Activated CD4-positive, alpha-beta T cell treated with anti-CD3 and anti-CD28 coated beads for 36 hours (primary cell): ENCODE measurements at regions of chr5 and their contacts with region 1.

Region 1: DNA sequence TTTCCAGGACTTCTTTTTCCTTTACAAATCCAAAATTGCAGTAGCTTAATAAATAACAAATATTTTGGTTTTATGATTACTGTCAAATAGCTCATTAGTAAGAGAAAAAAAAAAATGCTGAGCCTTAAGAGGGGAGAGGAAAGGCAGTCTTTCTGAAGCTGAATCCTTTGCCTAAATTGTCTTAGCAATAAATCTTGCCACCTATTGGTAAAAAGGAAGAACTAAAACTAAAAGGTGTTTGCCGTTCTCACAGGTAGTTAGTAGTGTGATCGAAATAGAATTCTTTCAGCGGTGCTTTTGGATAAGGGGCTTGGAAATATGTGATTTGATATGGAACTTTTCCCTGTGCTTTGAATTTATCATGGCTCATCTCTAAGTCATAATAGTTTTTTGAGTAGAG is 31.2 kb downstream of the PIK3R1 start:
- DNase-seq: no peak
- ATAC-seq: no peak
- H3K4me3 Mint-ChIP-seq: no peak overlapping the region
- H3K27ac Mint-ChIP-seq: no peak overlapping the region
- H3K4me1 Mint-ChIP-seq: peaks cover 71% of the 10 kb centered on the region
- H3K27me3 Mint-ChIP-seq: no peaks in the 10 kb centered on the region

Region 2: DNA sequence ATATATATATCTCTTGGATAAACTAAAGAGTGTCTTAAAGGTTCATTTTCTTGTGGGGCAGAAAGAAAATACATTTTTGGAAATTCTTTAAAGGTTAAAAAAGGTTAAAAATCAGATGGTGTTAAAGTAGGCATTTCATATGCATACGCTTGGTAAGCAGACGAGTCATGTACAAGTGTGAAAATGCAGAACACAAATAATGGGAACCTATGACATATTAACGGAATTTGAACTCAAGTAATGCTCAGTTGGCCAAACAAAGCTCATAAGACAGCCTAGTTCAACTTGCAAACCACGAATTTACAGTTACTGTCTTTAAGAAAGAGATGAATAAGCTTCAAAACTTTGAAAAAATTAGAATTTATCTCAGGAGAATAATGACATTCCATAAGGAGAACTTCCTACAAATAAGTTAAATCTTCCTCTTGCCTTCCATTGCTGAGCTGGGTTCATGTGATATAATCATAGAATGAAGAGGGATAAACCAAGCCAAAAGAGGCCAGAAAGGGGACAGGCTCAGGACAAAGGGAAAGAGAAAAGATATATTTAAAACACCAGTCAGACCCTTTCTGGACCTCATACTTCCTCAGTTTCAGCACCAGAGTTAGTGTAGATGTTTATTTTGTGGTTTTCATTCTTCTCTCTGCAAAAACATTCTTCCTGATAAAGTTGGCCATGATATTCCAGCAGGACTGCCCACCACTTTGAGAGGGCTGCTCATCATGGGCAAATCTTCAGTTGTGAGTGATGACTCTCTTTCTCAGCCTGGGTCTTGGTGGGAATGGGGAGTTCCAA is 793.5 kb before region 1 on chr5:
- CTCF ChIA-PET with region 1: no interaction called
- POLR2A ChIA-PET with region 1: no interaction called
- intact Hi-C with region 1: no loop called
- DNase-seq: no peak
- ATAC-seq: no peak
- H3K4me3 Mint-ChIP-seq: no peak overlapping the region
- H3K27ac Mint-ChIP-seq: no peak overlapping the region
- H3K4me1 Mint-ChIP-seq: peaks cover 14% of the 10 kb centered on the region
- H3K27me3 Mint-ChIP-seq: no peaks in the 10 kb centered on the region

Region 3: DNA sequence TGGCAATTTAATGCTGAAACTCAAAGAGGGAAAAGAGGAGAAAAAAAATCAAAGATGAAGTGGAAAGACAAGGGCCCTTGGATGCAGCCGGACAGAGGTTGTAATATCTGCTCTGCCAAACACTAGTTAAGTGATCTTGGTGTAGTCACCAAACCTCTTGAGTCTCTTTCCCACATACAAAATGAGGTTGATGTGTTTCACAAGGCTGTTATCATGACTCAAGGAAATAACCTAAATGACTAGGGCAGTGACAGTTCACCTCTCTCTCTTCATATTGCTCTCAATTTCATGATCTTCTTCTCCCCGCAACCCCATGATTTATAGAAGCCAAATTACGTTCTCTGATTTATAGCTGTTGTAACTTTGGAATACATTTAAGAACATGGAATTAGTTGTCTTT is 13.7 kb after region 1 on chr5:
- CTCF ChIA-PET with region 1: interaction called, 13 read pairs
- POLR2A ChIA-PET with region 1: no interaction called
- intact Hi-C with region 1: no loop called
- DNase-seq: no peak
- ATAC-seq: peak; percentile 80
- H3K4me3 Mint-ChIP-seq: no peak overlapping the region
- H3K27ac Mint-ChIP-seq: peak overlapping the region; percentile 77
- H3K4me1 Mint-ChIP-seq: peaks cover 84% of the 10 kb centered on the region
- H3K27me3 Mint-ChIP-seq: no peaks in the 10 kb centered on the region

Region 4: GRCh38 chr5:69317391-69317790 is 1070.6 kb after region 1 on chr5:
- CTCF ChIA-PET with region 1: no interaction called
- POLR2A ChIA-PET with region 1: no interaction called
- intact Hi-C with region 1: no loop called
- DNase-seq: no peak
- ATAC-seq: no peak
- H3K4me3 Mint-ChIP-seq: no peak overlapping the region
- H3K27ac Mint-ChIP-seq: no peak overlapping the region
- H3K4me1 Mint-ChIP-seq: no peaks in the 10 kb centered on the region
- H3K27me3 Mint-ChIP-seq: no peaks in the 10 kb centered on the region